HepG2 (cell line): ENCODE measurements at regions of chr11 and their contacts with region 1.

Region 1: GRCh38 chr11:34926101-34926830 is 9.8 kb downstream of the PDHX start:
- DNase-seq: peak; percentile 47
- ATAC-seq: no peak
- H3K4me3 ChIP-seq: no peak overlapping the region
- H3K27ac ChIP-seq: no peak overlapping the region
- H3K4me1 ChIP-seq: peaks cover 95% of the 10 kb centered on the region
- H3K27me3 ChIP-seq: no peaks in the 10 kb centered on the region
- CTCF ChIP-seq: peak; percentile 69
- EP300 ChIP-seq: no peak
- POLR2A ChIP-seq: no peak
- RAD21 ChIP-seq: peak; percentile 57; the same call in 1 of the 2 replicates

Region 2: DNA sequence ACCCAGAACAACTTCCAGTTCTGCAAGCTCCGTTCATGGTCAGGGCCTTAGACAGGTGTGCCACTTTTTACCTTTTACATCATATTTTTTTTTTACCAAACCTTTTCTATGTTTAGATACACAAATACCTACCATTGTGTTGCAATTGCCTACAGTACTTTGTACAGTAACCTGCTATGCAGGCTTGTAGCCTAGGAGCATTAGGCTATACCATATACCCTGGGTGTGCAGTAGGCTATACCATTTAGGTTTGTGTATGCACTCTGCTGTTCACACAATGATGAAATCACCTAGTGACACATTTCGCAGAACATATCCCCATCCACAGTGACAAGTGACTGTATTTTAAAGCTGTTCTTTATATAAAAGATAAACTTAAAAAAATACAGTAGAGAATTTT is 39.7 kb before region 1 on chr11:
- CTCF ChIA-PET with region 1: no interaction called
- POLR2A ChIA-PET with region 1: no interaction called
- in situ Hi-C with region 1: no loop called
- intact Hi-C with region 1: no loop called
- DNase-seq: peak; percentile 28
- ATAC-seq: peak; percentile 77
- H3K4me3 ChIP-seq: no peak overlapping the region
- H3K27ac ChIP-seq: no peak overlapping the region
- H3K4me1 ChIP-seq: peaks cover 19% of the 10 kb centered on the region
- H3K27me3 ChIP-seq: no peaks in the 10 kb centered on the region
- CTCF ChIP-seq: no peak
- EP300 ChIP-seq: no peak
- POLR2A ChIP-seq: no peak
- RAD21 ChIP-seq: no peak

Region 3: GRCh38 chr11:34916015-34916842 is 10.0 kb before region 1 on chr11 and contains the starts of genes APIP and PDHX:
- CTCF ChIA-PET with region 1: no interaction called
- POLR2A ChIA-PET with region 1: interaction called, 46 read pairs
- in situ Hi-C with region 1: no loop called
- intact Hi-C with region 1: no loop called
- DNase-seq: peak; percentile 94
- ATAC-seq: peak; percentile 95
- H3K4me3 ChIP-seq: peak within 1 kb of the TSS; percentile 89 to 100 (median 98)
- H3K27ac ChIP-seq: peak within 1 kb of the TSS; percentile 99
- H3K4me1 ChIP-seq: peaks cover 52% of the 10 kb centered on the region
- H3K27me3 ChIP-seq: no peaks in the 10 kb centered on the region; a peak in 1 of 5 replicates
- CTCF ChIP-seq: no peak; the same call in 1 of the 2 replicates
- EP300 ChIP-seq: no peak
- POLR2A ChIP-seq: peak; percentile 94 to 96
- RAD21 ChIP-seq: 0 out of 2 replicates have a peak, but pooled peaks have one; percentile 27
- total RNA-seq, gene APIP: 31.0 and 41.8 TPM in 2 replicates
- total RNA-seq, gene PDHX: 73.8 and 106 TPM in 2 replicates

Region 4: DNA sequence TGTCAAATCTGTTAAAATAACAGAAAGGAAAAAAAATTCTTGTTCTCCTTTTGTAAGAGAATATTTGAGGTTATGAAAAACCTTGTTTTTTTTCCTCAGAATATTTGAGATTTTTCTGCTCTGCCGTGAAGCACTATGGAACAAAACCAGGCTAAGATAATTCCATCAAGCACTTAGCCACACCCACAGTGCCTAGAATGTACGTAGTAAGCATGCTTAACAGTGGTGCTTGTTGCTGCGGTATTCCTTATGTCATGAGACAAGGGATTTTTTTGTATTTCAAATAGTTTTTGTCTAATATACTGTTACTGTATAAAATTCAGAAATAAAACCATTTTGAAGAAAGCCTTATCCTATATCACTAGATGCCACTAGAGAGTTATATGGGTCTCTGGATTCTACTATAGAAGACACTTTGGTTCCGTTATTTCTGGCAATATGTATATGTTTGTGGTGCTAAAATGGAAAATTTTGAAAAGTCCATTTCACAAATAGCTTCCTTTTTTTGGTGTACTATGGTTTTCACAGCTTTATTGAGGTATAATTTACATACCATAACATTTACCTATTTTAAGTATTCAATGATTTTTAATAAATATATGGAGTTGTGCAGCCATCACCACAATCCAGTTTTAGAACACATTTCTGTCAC is 13.9 kb after region 1 on chr11:
- CTCF ChIA-PET with region 1: no interaction called
- POLR2A ChIA-PET with region 1: no interaction called
- in situ Hi-C with region 1: no loop called
- intact Hi-C with region 1: no loop called
- DNase-seq: no peak
- ATAC-seq: no peak
- H3K4me3 ChIP-seq: no peak overlapping the region
- H3K27ac ChIP-seq: no peak overlapping the region
- H3K4me1 ChIP-seq: no peaks in the 10 kb centered on the region
- H3K27me3 ChIP-seq: no peaks in the 10 kb centered on the region
- CTCF ChIP-seq: no peak
- EP300 ChIP-seq: no peak
- POLR2A ChIP-seq: no peak
- RAD21 ChIP-seq: no peak

Region 5: GRCh38 chr11:34957206-34957605 is 30.9 kb after region 1 on chr11:
- CTCF ChIA-PET with region 1: no interaction called
- POLR2A ChIA-PET with region 1: no interaction called
- in situ Hi-C with region 1: no loop called
- intact Hi-C with region 1: no loop called
- DNase-seq: no peak
- ATAC-seq: no peak
- H3K4me3 ChIP-seq: no peak overlapping the region
- H3K27ac ChIP-seq: no peak overlapping the region
- H3K4me1 ChIP-seq: no peaks in the 10 kb centered on the region
- H3K27me3 ChIP-seq: no peaks in the 10 kb centered on the region
- CTCF ChIP-seq: no peak
- EP300 ChIP-seq: no peak
- POLR2A ChIP-seq: no peak
- RAD21 ChIP-seq: no peak

Region 6: DNA sequence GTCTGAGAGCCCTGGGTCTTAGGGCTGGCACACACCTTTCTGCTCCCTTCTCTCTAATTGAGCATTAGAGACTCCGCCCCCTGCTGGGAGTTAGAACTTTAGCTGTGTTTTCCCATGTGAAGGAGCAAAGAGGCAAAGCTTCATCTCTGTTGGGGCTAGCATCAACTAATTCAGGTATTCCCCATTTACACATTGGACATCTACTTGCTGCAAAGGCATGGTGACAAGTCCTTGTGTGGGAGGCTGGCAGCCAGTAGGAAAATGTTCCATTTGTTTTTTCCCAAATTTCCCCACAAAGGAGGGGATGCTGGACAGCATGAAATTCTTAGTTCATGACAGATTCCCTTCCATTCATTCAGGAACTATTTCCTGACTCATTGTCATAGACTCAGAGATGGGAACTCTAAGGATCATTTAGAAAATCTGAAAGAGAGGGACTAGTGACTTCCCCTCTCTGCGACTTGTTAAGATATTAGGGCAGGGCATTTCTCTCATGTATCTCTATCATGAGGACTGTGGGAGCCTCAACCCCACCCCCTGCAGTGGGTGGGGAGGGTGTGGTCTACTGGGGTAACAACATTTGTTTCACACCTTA is 216.3 kb after region 1 on chr11:
- CTCF ChIA-PET with region 1: interaction called, 4 read pairs
- POLR2A ChIA-PET with region 1: no interaction called
- in situ Hi-C with region 1: no loop called
- intact Hi-C with region 1: loop called (anchors 1 kb)
- DNase-seq: peak; percentile 20
- ATAC-seq: no peak; the same call in 2 of the 3 replicates
- H3K4me3 ChIP-seq: no peak overlapping the region
- H3K27ac ChIP-seq: no peak overlapping the region
- H3K4me1 ChIP-seq: no peaks in the 10 kb centered on the region
- H3K27me3 ChIP-seq: peaks cover 4 to 33% of the 10 kb centered on the region in 2 experiments; a peak in 3 of 5 replicates
- CTCF ChIP-seq: peak; percentile 34; the same call in 1 of the 2 replicates
- EP300 ChIP-seq: no peak
- POLR2A ChIP-seq: no peak
- RAD21 ChIP-seq: no peak

Region 7: GRCh38 chr11:35237860-35238715 is 311.8 kb after region 1 on chr11:
- CTCF ChIA-PET with region 1: interaction called, 14 read pairs
- POLR2A ChIA-PET with region 1: no interaction called
- in situ Hi-C with region 1: loop called (anchors 5 kb)
- intact Hi-C with region 1: loop called (anchors 1 kb)
- DNase-seq: peak; percentile 47
- ATAC-seq: peak; percentile 59
- H3K4me3 ChIP-seq: no peak overlapping the region
- H3K27ac ChIP-seq: no peak overlapping the region
- H3K4me1 ChIP-seq: peaks cover 12% of the 10 kb centered on the region; the same call in 1 of the 2 replicates
- H3K27me3 ChIP-seq: no peaks in the 10 kb centered on the region
- CTCF ChIP-seq: peak; percentile 82
- EP300 ChIP-seq: no peak
- POLR2A ChIP-seq: no peak
- RAD21 ChIP-seq: peak; percentile 50